ENCODE measurements at regions of chr12 and their contacts with region 1.

Region 1: DNA sequence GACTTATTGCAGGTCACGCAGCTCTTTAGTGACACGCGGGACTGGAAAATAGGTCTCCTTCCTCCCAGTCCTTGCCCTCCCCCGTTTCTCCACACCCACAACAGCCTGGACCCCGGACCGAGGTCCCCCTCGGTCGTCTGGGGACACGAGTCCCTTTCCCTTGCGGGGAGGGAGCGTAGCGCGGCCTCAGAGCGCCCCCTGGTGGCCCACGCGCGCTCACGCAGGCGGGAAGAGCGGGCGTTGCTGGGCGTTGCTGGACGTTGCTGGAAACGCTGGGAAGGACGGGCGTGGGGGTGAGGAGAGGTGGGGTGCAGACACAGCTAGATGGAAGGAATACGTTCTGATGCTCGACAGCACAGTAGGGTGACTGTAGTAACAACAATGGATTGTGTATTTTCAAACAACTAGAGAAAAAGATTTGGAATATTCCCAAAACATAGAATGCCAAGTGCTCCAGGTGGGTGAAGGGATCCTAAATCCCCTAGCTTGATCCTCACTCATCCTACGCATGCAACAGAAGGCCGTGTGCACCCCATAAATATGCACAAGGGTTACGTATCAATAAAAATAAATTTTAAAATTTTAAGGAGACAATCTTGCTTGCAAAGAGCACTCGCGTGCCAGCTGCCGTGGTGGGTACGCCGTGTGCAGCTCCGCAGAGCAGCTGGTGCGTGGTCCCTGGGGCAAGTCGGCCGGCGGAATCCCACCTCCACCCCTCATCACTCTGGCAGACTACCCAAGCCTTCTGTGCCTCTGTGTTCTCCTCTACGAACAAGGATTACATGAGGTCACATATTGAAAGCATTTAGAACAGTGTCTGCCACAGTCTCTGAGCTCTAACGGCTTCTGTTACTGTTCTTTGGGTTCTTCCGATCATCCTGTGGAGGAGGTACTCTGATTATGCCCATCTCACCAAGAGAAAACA is 87.4 kb downstream of the B4GALNT3 start:
- DNase-seq: peak in 4 of 6 donors; percentile 35 to 94 (median 78)
- ATAC-seq: peak; percentile 88 to 93 (median 93)
- H3K4me3 ChIP-seq: no peak overlapping the region
- H3K27ac ChIP-seq: no peak overlapping the region
- H3K4me1 ChIP-seq: no peaks in the 10 kb centered on the region
- H3K27me3 ChIP-seq: peaks cover 0 to 3% (median 0%) of the 10 kb centered on the region in 4 donors
- CTCF ChIP-seq: peak; percentile 96 to 98 (median 98)

Region 2: DNA sequence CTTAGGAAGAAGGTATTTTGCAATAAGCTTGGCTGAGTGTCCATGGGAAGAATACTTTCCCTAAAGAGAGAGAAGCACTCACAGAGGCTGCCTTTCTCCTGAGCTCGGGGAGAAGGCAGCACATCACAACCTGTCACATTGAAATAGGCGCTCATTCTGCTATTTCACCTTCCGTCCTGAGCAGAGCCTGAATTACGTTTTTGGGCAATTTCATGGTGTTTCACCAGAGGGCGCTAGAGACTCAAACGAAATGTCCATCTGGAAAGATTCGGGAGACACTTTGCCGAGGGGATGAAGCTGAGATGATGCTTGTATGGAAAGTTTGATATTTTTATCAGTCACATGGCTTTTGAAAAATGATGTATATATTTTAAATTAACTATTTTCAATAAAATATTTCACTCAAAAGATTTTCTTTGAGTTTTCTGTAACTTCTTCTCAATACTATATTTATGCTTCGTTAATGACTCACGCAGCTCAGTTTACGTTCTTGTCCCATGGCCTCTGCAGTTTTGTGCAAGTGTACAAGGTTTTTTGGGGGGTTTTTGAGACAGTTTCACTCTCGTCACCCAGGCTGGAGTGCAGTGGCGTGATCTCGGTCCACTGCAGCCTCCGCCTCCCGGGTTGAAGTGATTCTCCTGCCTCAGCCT is 104.8 kb before region 1 on chr12:
- intact Hi-C with region 1: loop called (anchors 5 to 10 kb)
- DNase-seq: peak in 2 of 6 donors; percentile 31 to 70
- ATAC-seq: peak in 3 of 4 donors; percentile 69 to 82 (median 70)
- H3K4me3 ChIP-seq: no peak overlapping the region
- H3K27ac ChIP-seq: no peak overlapping the region
- H3K4me1 ChIP-seq: no peaks in the 10 kb centered on the region
- H3K27me3 ChIP-seq: no peaks in the 10 kb centered on the region
- CTCF ChIP-seq: peak; percentile 40 to 69 (median 64)